ENCODE measurements at regions of chr4 and their contacts with region 1.

Region 1: GRCh38 chr4:56435306-56435926 is at the start of gene PPAT:
- DNase-seq: peak; percentile 98
- H3K4me3 Mint-ChIP-seq: peak within 1 kb of the TSS; percentile 99
- H3K27ac Mint-ChIP-seq: peak within 1 kb of the TSS; percentile 96
- H3K4me1 Mint-ChIP-seq: peaks cover 56% of the 10 kb centered on the region
- H3K27me3 Mint-ChIP-seq: no peaks in the 10 kb centered on the region
- total RNA-seq, gene PPAT: 21.6 to 22.7 TPM

Region 2: GRCh38 chr4:55948726-55949474 is 486.5 kb before region 1 on chr4 and contains the start of gene CEP135:
- CTCF ChIA-PET with region 1: interaction called, 14 read pairs
- POLR2A ChIA-PET with region 1: interaction called, 11 read pairs
- DNase-seq: peak; percentile 95
- H3K4me3 Mint-ChIP-seq: peak within 1 kb of the TSS; percentile 78
- H3K27ac Mint-ChIP-seq: peak within 1 kb of the TSS; percentile 94
- H3K4me1 Mint-ChIP-seq: peaks cover 46% of the 10 kb centered on the region
- H3K27me3 Mint-ChIP-seq: no peaks in the 10 kb centered on the region
- total RNA-seq, gene CEP135: 18.0 to 18.8 TPM

Region 3: GRCh38 chr4:56261027-56261426 is 174.4 kb before region 1 on chr4:
- CTCF ChIA-PET with region 1: no interaction called
- POLR2A ChIA-PET with region 1: no interaction called
- DNase-seq: peak; percentile 52
- H3K4me3 Mint-ChIP-seq: no peak overlapping the region
- H3K27ac Mint-ChIP-seq: no peak overlapping the region
- H3K4me1 Mint-ChIP-seq: peaks cover 11% of the 10 kb centered on the region
- H3K27me3 Mint-ChIP-seq: peaks cover 11% of the 10 kb centered on the region

Region 4: DNA sequence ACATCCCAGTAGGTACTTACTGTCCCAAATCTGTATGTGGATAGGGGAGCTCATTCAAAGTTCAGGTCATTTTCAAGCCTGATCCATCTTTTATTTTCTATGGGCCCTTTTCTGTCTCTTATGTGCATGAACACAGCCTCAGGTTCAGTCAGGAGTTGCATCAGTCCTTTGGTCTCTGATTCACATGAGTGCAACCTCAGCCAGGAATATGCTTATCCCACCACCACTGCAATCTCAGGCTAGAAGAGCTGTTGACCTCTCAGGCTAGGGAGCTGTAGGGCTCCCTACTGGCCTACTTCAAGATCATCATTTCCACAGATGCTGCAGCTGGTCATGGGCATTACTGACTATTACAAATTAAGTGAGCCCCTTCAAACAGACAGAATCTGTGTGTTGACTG is 75.3 kb before region 1 on chr4:
- CTCF ChIA-PET with region 1: no interaction called
- POLR2A ChIA-PET with region 1: no interaction called
- DNase-seq: no peak
- H3K4me3 Mint-ChIP-seq: no peak overlapping the region
- H3K27ac Mint-ChIP-seq: no peak overlapping the region
- H3K4me1 Mint-ChIP-seq: no peaks in the 10 kb centered on the region
- H3K27me3 Mint-ChIP-seq: no peaks in the 10 kb centered on the region

Region 5: DNA sequence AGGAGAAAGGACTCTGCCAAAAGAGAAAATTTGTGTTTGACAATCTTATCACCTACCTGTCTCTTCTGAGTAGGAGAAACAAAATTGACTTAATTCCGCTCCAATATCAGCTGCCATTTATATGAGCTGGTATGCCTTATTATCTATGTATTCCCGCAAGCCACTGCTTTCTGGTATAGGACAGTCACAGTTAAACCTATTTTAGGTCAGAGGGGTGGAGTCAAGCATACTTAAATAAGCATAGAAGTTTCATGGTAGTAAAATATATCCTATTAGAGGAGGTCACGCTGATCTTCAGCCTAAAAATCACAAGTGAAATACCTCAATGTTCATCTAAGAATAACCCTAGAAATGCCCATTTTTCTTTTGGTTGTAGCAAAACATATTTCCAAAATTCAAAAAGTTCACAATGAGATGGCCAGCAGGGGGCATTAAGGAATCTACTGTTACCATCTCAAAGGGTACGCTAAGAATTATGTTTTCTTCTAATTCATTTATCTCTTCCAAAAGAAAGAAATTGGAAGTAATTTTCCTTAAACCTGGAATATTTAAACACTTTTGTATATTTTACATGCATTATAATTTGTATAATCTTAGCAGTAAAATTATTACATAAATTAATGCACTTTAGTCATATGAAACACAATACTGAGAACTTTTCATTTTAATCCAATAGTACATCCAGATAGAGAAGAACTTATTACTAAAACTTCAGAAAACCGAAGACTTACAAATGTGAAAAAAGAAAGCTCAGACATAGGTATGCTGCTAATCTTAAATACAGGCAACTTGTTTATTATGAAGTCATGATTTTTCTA is 10.5 kb before region 1 on chr4:
- CTCF ChIA-PET with region 1: interaction called, 24 read pairs
- POLR2A ChIA-PET with region 1: interaction called, 14 read pairs
- DNase-seq: peak; percentile 32
- H3K4me3 Mint-ChIP-seq: no peak overlapping the region
- H3K27ac Mint-ChIP-seq: no peak overlapping the region
- H3K4me1 Mint-ChIP-seq: peaks cover 17% of the 10 kb centered on the region
- H3K27me3 Mint-ChIP-seq: no peaks in the 10 kb centered on the region

Region 6: GRCh38 chr4:56460085-56460484 is 24.7 kb after region 1 on chr4:
- CTCF ChIA-PET with region 1: interaction called, 26 read pairs
- POLR2A ChIA-PET with region 1: interaction called, 53 read pairs
- DNase-seq: no peak
- H3K4me3 Mint-ChIP-seq: no peak overlapping the region
- H3K27ac Mint-ChIP-seq: peak overlapping the region; percentile 24
- H3K4me1 Mint-ChIP-seq: peaks cover 14% of the 10 kb centered on the region
- H3K27me3 Mint-ChIP-seq: no peaks in the 10 kb centered on the region

Region 7: DNA sequence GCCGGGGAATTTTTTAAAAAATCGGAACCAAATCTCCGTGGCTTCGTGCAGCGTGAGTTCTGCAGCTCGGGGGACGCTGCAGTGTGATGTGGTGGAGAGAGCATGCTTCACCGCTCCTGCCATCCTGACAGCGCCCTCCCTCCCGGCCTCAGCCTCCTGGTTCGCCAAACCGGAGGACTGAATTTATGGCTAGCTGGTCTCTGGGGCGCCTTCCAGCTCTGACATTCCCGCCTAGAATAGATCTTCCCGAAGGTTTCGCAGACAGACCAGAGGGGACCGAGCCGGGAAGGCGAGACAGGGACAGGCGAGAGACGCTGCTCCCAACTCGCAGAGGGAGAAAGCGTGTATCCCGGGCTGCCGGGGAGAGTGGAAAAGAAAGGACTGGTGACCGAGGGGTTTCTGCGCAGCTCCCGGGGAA is 219.8 kb after region 1 on chr4:
- CTCF ChIA-PET with region 1: interaction called, 8 read pairs
- POLR2A ChIA-PET with region 1: interaction called, 11 read pairs
- DNase-seq: no peak
- H3K4me3 Mint-ChIP-seq: peak overlapping the region; percentile 81
- H3K27ac Mint-ChIP-seq: peak overlapping the region; percentile 84
- H3K4me1 Mint-ChIP-seq: peaks cover 63% of the 10 kb centered on the region
- H3K27me3 Mint-ChIP-seq: peaks cover 18% of the 10 kb centered on the region

Region 8: GRCh38 chr4:56977321-56978012 is 542.1 kb after region 1 on chr4 and contains the start of gene NOA1:
- CTCF ChIA-PET with region 1: interaction called, 5 read pairs
- POLR2A ChIA-PET with region 1: interaction called, 79 read pairs
- DNase-seq: peak; percentile 99
- H3K4me3 Mint-ChIP-seq: peak within 1 kb of the TSS; percentile 99
- H3K27ac Mint-ChIP-seq: peak within 1 kb of the TSS; percentile 98
- H3K4me1 Mint-ChIP-seq: peaks cover 57% of the 10 kb centered on the region
- H3K27me3 Mint-ChIP-seq: no peaks in the 10 kb centered on the region
- total RNA-seq, gene NOA1: 22.1 to 22.6 TPM